Prostate gland (tissue), 2 donors: ENCODE measurements at regions of chr17 and their contacts with region 1.

Region 1: DNA sequence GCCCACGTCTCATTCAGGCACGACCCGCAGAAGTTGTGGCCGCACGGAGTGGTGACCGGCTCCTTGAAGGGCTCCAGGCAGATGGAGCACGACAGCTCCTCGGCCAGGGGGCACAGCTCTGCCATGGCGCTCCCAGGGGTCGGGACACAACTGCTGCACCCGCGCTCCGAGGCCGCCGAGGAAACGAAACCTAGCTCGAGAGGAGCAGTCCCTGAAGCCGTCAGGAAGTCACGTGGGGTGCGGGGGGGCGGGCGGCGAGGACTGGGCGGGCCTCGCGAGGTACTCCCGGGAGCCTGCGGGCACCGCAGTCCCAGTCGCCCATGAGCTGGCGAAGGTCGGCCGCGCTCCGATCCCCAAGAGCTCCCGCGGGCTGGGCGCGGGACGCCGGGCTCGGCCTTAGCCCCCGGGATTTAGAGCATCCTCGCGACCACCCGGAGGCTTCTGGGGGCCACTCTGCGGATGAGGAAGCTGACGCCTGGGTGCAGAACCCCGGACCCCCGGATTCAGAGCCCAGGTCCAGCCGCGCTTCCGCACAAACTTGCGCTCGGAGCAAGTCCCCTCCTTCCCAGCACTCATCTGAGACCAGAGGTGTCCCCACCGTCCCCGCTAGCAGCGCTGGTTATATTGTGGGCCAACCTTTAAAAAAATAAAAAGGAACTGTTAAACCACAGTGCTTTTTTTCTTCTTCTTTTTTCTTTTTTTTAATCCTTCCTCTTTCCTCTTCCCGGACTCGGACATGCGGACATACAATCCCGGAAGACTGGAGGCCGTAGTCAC is at the start of gene TRIM25:
- DNase-seq: peak; percentile 95
- H3K4me3 ChIP-seq: peak within 1 kb of the TSS; percentile 55 to 68
- H3K27ac ChIP-seq: peak within 1 kb of the TSS; percentile 78 to 87
- H3K4me1 ChIP-seq: peaks cover under 1% of the 10 kb centered on the region
- H3K27me3 ChIP-seq: no peaks in the 10 kb centered on the region
- CTCF ChIP-seq: peak in 1 of 4 experiments; percentile 12
- POLR2A ChIP-seq: peak; percentile 99
- total RNA-seq, gene TRIM25: 28.7 to 49.0 TPM

Region 2: DNA sequence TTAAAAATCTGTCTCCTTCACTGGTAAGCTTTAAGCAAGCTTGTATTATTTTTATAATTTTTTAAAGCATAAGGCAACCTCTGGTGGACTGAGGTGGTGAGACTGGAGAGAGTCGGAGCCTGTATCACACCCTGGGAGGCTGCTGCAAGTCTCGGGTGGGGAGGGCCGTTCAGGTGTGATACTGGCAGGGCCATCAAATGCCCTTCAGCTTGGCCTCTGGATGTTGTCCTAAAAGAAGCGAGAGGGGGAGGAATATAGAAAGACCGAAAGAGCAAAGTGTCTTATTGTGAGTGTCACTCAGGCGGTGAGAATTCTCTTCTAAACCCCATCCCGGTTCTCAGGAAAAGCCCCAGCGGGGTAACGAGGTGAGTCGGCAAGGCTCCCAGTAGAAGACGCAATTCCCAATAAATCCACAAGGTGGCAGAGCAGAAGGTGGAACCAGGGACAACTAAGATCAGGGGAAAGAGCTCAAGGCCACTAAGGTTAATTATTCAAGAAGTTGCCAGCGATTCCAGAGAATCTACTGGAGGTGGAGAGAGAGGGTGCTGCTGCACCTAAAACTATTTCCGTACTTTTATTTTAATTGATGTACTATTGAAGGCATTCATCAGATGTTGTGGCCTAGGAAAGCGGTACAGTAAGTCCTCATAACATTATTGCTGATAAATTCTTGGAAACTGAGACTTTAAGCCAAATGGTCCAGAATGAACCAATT is 94.5 kb before region 1 on chr17:
- intact Hi-C with region 1: no loop called
- DNase-seq: peak; percentile 68
- H3K4me3 ChIP-seq: no peak overlapping the region
- H3K27ac ChIP-seq: no peak overlapping the region
- H3K4me1 ChIP-seq: no peaks in the 10 kb centered on the region
- H3K27me3 ChIP-seq: no peaks in the 10 kb centered on the region
- CTCF ChIP-seq: peak; percentile 74 to 88 (median 84)
- POLR2A ChIP-seq: no peak

Region 3: DNA sequence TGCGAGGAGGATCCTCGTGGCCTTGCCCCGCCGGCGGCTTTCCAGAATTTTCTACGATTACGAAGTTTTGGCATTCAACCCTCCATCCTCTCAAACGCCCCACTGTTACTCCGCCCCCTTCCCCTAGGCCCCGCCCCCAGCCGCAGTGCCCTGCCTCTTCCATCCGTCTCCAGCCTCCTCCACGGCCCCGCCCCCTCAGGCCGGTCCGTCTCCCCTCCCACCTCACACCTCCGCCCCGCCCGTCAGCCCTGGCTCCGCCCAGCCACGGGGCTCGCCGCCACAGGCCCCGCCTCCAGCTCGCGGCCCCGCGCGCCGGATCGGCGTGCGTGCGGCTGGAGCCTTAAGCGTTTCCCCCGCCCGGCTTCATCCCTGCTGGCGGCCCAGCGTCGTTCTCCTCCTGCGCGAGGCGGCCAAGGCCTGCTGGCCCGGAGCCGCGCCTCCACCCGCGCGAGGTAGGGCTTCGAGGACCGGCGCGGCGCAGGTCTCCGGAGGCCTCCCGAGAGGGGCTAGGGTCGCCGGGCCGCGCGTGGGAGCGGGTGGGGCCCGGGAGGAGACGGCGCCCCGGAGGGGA is 80.2 kb before region 1 on chr17 and contains the starts of genes C17orf67 and DGKE:
- intact Hi-C with region 1: loop called (anchors 5 kb)
- DNase-seq: peak; percentile 98
- H3K4me3 ChIP-seq: peak within 1 kb of the TSS; percentile 67 to 79
- H3K27ac ChIP-seq: peak within 1 kb of the TSS; percentile 91 to 95
- H3K4me1 ChIP-seq: no peaks in the 10 kb centered on the region
- H3K27me3 ChIP-seq: no peaks in the 10 kb centered on the region
- CTCF ChIP-seq: peak in 1 of 4 experiments; percentile 26
- POLR2A ChIP-seq: peak; percentile 83
- total RNA-seq, gene C17orf67: 2.5 to 2.6 TPM
- total RNA-seq, gene DGKE: 7.7 to 13.3 TPM

Region 4: DNA sequence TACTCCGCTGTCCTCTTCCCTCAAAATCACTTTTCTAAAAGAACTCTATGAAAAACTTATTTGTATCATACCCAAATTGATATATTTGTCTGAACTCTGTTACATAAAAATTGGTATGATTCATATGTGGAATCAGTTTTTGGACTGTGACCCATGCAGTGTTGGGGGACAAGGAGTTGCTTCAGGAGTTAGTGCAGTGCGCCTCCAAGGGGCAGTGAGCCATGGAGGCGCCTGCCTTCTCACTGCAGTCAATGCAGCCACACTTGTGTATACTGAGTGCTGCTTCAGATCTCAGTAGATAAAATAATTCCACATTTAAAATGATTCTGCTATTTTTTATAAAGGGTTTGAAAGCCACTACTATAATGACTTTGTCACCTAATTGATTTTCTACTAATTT is 47.6 kb before region 1 on chr17:
- intact Hi-C with region 1: no loop called
- DNase-seq: no peak
- H3K4me3 ChIP-seq: no peak overlapping the region
- H3K27ac ChIP-seq: no peak overlapping the region
- H3K4me1 ChIP-seq: no peaks in the 10 kb centered on the region
- H3K27me3 ChIP-seq: no peaks in the 10 kb centered on the region
- CTCF ChIP-seq: no peak
- POLR2A ChIP-seq: no peak

Region 5: GRCh38 chr17:56960596-56961538 is 46.8 kb after region 1 on chr17 and contains the start of gene COIL:
- intact Hi-C with region 1: loop called (anchors 5 kb)
- DNase-seq: peak; percentile 91
- H3K4me3 ChIP-seq: peak within 1 kb of the TSS; percentile 80 to 85
- H3K27ac ChIP-seq: peak within 1 kb of the TSS; percentile 88 to 92
- H3K4me1 ChIP-seq: no peaks in the 10 kb centered on the region
- H3K27me3 ChIP-seq: no peaks in the 10 kb centered on the region
- CTCF ChIP-seq: peak; percentile 91 to 100 (median 99)
- POLR2A ChIP-seq: peak; percentile 10
- total RNA-seq, gene COIL: 14.8 to 22.3 TPM